Aorta (tissue), 5 donors: ENCODE measurements at regions of chr17 and their contacts with region 1.

Region 1: DNA sequence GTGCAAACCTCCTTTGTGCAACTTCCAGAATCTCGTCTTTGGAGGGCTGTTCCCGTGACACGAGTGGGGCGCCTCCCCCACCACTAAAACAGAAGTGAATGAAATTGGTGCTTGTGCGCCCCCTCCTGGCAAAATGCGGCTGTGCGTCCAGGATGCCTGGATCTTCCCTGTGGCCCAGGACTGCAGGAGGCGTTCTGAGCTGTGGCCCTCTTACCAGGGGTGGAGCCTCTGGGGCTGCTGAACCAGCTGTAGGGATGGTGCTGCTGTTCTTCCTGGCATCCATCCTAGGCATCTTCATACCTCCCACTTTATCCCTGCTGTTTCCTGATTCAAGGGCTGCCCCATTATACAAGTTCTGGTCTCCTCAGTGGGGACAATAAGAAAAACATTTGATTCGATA is 18.5 kb upstream of the NAGLU start:
- DNase-seq: peak; percentile 94
- ATAC-seq: peak; percentile 68
- H3K4me3 ChIP-seq: no peak overlapping the region
- H3K27ac ChIP-seq: peak overlapping the region; percentile 91 to 97
- H3K4me1 ChIP-seq: peaks cover 0 to 11% of the 10 kb centered on the region in 2 donors
- H3K27me3 ChIP-seq: no peaks in the 10 kb centered on the region

Region 2: DNA sequence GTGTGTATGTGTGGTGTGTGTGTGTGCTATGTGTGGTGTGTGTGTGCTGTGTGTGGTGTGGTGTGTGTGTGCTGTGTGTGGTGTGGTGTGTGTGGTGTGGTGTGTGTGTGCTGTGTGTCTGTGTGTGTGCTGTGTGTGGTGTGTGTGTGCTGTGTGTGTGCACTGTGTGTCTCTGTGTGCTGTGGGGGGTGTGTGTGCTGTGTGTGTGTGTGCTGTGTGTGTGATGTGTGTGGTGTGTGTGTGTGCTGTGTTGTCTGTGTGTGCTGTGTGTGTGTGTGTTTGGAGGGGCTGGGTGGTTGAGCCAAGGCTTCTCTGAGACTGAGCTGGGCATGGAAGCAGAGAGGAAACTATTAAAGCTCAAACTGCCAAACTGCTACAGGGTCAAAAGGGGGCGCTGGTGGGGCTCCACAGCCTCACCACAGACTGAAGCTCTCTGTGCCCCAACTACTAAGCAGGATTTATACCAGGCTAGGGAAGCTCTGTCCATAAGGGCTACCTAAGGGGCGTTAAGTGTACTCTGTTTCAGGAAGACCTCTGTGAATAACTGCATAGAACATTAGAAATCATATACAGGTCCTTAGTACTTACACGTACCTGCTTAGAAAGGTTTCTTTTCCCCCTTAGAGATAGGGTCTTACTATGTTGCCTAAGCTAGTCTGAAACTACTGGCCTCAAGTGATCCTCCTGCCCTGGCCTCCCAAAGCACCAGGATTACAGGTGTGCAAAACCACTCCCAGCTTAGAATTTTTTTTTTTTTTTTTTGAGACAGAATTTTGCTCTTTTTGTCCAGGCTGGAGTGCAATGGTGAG is 295.4 kb before region 1 on chr17:
- intact Hi-C with region 1: no loop called
- DNase-seq: no peak
- ATAC-seq: no peak
- H3K4me3 ChIP-seq: no peak overlapping the region
- H3K27ac ChIP-seq: no peak overlapping the region
- H3K4me1 ChIP-seq: no peaks in the 10 kb centered on the region
- H3K27me3 ChIP-seq: no peaks in the 10 kb centered on the region

Region 3: DNA sequence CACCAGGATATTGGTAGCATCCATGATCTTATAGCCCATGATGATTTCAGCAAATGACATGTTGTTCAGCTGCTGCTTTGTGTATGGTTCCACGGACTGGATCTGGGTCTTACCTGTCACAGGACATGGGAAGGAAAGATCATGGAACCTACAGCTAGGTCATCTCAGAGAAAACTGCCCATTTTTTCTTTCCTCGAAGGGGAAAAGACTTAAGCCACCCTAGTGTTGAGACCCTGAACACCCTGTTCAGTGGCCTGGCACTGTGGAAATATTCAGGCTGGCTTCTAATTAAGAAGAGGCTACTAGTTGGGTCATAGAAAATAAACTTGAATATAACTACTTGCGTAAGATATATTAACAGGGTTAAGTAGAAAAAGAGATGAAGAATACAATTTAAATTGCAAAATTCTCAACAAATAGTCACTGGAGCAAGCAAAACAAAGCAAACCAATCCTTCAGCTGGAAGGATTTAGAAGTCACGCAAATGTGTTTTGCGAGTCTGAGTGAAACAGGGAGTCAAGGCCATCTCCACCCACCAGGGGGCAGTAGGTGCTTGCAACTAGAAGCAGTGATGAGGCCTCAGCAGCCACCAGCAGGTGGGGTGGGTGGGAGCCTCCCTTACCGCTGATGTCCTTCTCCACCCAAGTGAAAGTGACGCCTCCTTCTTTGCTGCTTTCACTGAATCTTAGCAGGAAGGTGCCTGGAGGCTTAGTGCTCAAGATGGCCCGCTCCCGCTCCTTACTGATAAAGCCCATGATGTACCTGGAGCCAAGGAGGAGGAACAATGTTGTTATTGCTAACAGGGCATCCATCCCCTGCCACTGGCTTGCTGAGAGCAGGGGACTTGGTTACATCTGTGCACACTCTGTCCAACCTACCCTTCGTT is 194.9 kb before region 1 on chr17:
- intact Hi-C with region 1: loop called (anchors 2 to 5 kb)
- DNase-seq: peak; percentile 94 to 97
- ATAC-seq: peak; percentile 90
- H3K4me3 ChIP-seq: no peak overlapping the region
- H3K27ac ChIP-seq: peak overlapping the region in 1 of 2 donors; percentile 4
- H3K4me1 ChIP-seq: no peaks in the 10 kb centered on the region
- H3K27me3 ChIP-seq: no peaks in the 10 kb centered on the region

Region 4: DNA sequence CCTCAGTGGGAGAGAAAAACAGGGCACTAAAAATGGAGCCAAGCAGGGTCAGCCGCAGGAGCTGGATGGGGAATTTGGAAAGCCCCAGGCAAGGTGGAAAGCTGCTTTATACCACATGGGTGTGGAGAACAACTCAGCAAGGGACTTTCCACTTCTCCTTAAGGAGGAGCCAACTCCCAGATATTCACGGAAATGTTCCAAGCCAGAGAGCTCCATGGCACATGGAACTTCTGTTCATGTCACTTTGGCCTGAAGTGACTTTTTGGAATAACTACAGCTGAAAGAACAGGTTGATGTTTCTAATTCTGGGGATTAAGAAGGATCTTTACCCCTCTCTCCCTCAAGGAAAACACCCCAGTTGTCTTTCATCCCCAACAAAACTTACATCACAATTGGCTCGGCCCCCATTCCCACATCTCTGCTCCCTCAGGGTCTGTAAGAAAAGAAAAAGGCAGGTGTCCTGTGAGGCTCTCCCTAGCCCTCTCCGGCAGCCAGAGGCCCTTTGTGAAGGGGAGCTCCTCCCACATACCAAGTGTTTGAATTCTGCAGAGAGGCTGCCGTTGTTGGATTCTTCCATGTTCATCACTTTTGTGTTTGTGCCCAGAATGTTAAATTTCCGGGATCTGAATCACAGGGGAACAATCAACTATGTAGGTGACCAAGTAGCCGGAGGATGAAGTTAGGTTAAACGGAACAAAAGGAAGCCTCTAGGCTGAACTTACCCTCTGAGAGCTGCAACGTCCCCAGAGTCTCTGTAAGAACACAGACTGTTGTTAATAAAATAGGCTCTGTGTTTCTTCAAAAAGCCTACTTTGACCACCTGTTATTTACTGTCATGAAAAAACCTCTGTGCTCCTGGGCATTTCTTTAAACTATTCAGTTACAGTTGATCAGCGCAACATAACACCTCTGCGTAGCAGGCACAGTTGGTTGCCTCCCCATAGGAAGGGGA is 188.2 kb before region 1 on chr17:
- intact Hi-C with region 1: loop called (anchors 2 to 5 kb)
- DNase-seq: peak in 1 of 2 donors; percentile 47
- ATAC-seq: peak; percentile 62
- H3K4me3 ChIP-seq: no peak overlapping the region
- H3K27ac ChIP-seq: peak overlapping the region; percentile 57 to 79
- H3K4me1 ChIP-seq: no peaks in the 10 kb centered on the region
- H3K27me3 ChIP-seq: no peaks in the 10 kb centered on the region

Region 5: GRCh38 chr17:42411361-42411760 is 106.2 kb before region 1 on chr17:
- intact Hi-C with region 1: no loop called
- DNase-seq: no peak
- ATAC-seq: no peak
- H3K4me3 ChIP-seq: no peak overlapping the region
- H3K27ac ChIP-seq: peak overlapping the region in 1 of 2 donors; percentile 28
- H3K4me1 ChIP-seq: peaks cover 0 to 6% of the 10 kb centered on the region in 2 donors
- H3K27me3 ChIP-seq: no peaks in the 10 kb centered on the region

Region 6: DNA sequence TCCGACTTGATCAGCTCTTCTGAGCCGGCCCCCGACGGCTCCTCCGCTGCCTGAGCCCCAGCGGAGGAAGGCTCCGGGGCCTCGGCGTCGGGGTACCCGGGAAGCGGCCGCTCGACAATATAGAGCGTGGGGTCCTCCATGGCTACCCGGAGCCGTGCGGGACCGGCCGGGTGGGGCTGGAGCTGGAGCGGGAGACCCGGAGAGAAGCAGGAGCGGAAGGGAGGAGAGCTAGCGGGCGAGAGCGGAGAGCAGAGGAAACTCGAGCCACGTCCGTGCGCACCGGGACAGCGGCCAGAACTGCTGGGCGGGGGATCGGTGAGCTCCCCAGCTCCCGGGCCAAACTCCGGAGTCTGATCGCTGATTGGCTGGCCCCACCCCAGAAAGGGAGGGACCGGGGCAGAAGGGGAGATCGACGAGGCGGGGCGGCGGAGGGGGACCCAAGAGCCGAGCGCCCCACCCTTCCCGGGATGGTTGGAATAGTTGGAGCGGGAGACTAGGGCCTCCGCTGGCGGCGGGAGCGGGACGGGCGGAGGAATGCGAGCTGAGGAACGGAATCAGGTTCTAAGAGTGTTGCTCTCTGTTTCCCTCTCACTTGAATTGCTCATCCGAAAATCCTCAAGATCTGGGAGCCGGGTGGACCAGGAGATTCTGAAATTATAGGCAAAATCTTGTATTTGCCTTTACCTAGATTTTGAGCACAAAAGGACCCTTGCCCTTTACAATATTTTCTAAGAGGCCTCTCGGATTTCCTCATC is 94.4 kb before region 1 on chr17 and contains the start of gene CAVIN1:
- intact Hi-C with region 1: loop called (anchors 2 to 5 kb)
- DNase-seq: peak; percentile 98 to 100
- ATAC-seq: peak; percentile 94
- H3K4me3 ChIP-seq: peak within 1 kb of the TSS; percentile 71 to 79
- H3K27ac ChIP-seq: peak within 1 kb of the TSS; percentile 93 to 98
- H3K4me1 ChIP-seq: peaks cover under 1 to 3% of the 10 kb centered on the region in 2 donors
- H3K27me3 ChIP-seq: no peaks in the 10 kb centered on the region
- total RNA-seq, gene CAVIN1: 569 to 643 TPM

Region 7: GRCh38 chr17:42467859-42468258 is 49.7 kb before region 1 on chr17:
- intact Hi-C with region 1: loop called in 1 of 2 experiments (anchors 5 kb)
- DNase-seq: no peak
- ATAC-seq: no peak
- H3K4me3 ChIP-seq: no peak overlapping the region
- H3K27ac ChIP-seq: no peak overlapping the region
- H3K4me1 ChIP-seq: no peaks in the 10 kb centered on the region
- H3K27me3 ChIP-seq: no peaks in the 10 kb centered on the region

Region 8: DNA sequence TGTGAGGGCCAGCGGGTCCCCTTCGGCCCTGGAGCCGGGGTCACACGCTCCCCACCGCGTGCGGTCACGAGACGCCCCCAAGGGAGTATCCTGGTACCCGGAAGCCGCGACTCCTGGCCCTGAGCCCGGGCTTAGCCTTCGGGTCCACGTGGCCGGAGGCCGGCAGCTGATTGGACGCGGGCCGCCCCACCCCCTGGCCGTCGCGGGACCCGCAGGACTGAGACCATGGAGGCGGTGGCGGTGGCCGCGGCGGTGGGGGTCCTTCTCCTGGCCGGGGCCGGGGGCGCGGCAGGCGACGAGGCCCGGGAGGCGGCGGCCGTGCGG is 18.5 kb after region 1 on chr17 and contains the start of gene NAGLU:
- intact Hi-C with region 1: no loop called
- DNase-seq: peak; percentile 99
- ATAC-seq: peak; percentile 93
- H3K4me3 ChIP-seq: peak within 1 kb of the TSS; percentile 77 to 81
- H3K27ac ChIP-seq: peak within 1 kb of the TSS in 1 of 2 donors; percentile 87
- H3K4me1 ChIP-seq: no peaks in the 10 kb centered on the region
- H3K27me3 ChIP-seq: no peaks in the 10 kb centered on the region
- total RNA-seq, gene NAGLU: 38.8 to 41.9 TPM

Region 9: DNA sequence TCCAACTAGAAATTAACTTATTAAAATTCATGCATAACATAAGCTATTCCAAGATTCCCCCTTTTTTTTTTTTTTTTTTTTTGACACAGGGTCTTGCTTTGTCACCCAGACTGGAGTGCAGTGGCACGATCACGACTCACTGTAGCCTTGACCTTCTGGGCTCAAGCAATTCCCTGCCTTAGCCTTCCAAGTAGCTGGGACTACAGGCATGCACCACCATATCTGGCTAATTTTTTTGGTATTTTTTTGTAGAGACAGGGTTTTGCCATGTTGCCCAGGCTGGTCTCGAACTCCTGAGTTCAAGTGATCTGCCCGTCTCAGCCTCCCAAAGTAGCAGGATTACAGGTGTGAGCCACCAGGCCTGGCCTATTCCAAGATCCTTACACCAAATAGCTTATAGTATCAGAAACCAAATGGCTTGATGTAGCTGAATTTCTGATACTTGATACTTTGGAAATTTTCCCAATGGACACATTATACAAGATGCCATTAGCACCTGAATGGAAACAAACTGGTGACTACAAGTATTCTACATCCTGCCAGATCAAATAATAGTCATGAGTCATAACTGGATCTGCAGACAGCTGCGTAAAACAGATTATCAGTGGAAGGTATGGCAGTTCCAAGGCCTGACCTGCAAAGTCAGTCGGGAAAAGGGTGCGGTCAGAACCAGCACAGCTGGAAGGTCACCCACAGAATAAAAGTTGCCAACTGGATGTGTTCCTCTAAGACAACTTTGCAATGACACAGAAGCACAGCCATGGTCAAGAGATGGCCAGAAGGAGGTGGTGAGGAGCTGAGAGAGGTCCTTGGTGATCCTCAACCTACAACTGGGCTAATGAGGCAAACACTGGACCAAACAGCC is 106.4 kb after region 1 on chr17:
- intact Hi-C with region 1: no loop called
- DNase-seq: no peak
- ATAC-seq: no peak
- H3K4me3 ChIP-seq: no peak overlapping the region
- H3K27ac ChIP-seq: no peak overlapping the region
- H3K4me1 ChIP-seq: no peaks in the 10 kb centered on the region
- H3K27me3 ChIP-seq: no peaks in the 10 kb centered on the region